Activated naive CD4-positive, alpha-beta T cell treated with anti-CD3 and anti-CD28 coated beads, Interleukin-2, amount 10 ng/mL, durations not matched to agents 7 days and 5 days (primary cell): ENCODE measurements at regions of chr11 and their contacts with region 1.

Region 1: GRCh38 chr11:13238879-13239514 is 38.6 kb upstream of the BMAL1 start:
- DNase-seq: peak; percentile 62
- H3K4me3 Mint-ChIP-seq: no peak overlapping the region
- H3K27ac Mint-ChIP-seq: no peak overlapping the region
- H3K4me1 Mint-ChIP-seq: no peaks in the 10 kb centered on the region
- H3K27me3 Mint-ChIP-seq: peaks cover 23% of the 10 kb centered on the region

Region 2: DNA sequence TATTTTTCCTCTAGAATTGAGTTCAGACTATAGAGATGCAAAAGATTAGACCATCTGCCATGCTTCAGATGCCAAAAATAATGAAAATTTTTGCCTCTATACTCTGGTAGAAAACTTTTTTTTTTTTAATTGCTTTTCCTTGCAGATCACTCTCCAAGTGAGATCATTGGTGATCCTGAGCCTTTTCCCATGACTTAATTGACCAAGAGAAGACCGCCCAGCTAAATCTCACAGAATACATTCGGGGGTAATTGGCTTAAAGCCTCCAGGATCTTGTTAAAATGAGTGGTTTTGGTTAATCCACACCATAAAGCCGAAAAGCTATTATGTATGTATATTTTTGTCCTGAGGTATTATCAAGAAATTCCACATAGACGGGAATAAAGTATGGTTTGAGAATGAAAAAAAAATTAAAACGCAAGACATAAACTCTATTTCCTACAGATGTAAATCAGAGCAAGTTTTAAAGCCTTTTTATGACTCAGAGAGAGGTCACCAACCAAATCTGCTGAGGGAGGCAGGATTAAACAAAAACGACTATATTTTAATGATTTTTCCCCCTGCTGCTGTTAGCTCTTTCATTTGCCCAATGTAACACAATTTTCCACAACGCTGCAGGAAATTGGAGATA is 797.7 kb before region 1 on chr11:
- CTCF ChIA-PET with region 1: no interaction called
- DNase-seq: no peak
- H3K4me3 Mint-ChIP-seq: no peak overlapping the region
- H3K27ac Mint-ChIP-seq: no peak overlapping the region
- H3K4me1 Mint-ChIP-seq: no peaks in the 10 kb centered on the region
- H3K27me3 Mint-ChIP-seq: peaks cover 5% of the 10 kb centered on the region

Region 3: DNA sequence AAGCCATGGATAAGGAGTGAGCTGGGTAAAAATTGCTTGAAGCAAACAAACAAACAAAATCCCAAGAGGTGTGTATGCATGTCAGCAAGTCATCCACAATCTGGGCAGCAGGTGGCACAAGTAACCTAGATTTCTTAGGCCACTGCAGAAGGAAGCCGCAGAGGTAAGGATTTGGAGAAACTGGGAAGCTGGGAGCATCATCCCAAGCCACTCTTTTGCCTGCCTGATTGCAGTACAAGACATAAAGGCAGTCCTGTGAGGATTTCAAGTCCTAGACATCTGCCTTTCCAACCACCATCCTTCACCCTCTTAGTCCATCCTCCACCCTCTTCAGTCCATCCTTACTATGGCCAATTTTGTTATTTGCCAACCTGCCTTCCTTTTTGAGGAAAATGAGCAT is 28.6 kb before region 1 on chr11:
- CTCF ChIA-PET with region 1: interaction called, 16 read pairs
- DNase-seq: peak; percentile 54
- H3K4me3 Mint-ChIP-seq: no peak overlapping the region
- H3K27ac Mint-ChIP-seq: no peak overlapping the region
- H3K4me1 Mint-ChIP-seq: peaks cover 33% of the 10 kb centered on the region
- H3K27me3 Mint-ChIP-seq: no peaks in the 10 kb centered on the region